Activated naive CD4-positive, alpha-beta T cell treated with anti-CD3 and anti-CD28 coated beads, Interleukin-2, amount 10 ng/mL, durations not matched to agents 7 days and 5 days (primary cell): ENCODE measurements at regions of chr17 and their contacts with region 1.

Region 1: GRCh38 chr17:4980644-4981216 is 6.7 kb downstream of the CAMTA2 start:
- DNase-seq: peak; percentile 66
- H3K4me3 Mint-ChIP-seq: no peak overlapping the region
- H3K27ac Mint-ChIP-seq: peak overlapping the region; percentile 58
- H3K4me1 Mint-ChIP-seq: peaks cover 34% of the 10 kb centered on the region
- H3K27me3 Mint-ChIP-seq: no peaks in the 10 kb centered on the region

Region 2: DNA sequence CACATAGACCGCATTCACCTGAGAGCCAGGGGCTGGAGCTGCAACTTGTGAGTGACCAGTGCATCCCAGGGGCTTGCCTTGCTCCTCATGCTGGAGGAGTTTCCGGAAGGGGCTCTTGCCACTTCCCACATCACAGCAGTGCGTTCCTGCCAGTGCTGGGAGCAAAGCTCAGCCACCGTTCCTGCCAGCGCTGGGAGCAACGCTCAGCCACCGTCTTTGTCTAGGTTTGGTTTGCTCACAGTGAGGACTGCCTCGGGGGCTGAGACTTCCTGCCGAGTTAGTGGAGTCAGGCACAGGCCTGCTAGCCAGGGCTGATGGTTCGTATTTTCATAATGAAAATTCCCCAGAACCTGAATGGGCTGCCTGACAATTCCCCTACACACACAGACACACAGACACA is 72.4 kb before region 1 on chr17:
- CTCF ChIA-PET with region 1: interaction called, 11 read pairs
- DNase-seq: peak; percentile 47
- H3K4me3 Mint-ChIP-seq: no peak overlapping the region
- H3K27ac Mint-ChIP-seq: no peak overlapping the region
- H3K4me1 Mint-ChIP-seq: peaks cover 12% of the 10 kb centered on the region
- H3K27me3 Mint-ChIP-seq: peaks cover 26% of the 10 kb centered on the region

Region 3: DNA sequence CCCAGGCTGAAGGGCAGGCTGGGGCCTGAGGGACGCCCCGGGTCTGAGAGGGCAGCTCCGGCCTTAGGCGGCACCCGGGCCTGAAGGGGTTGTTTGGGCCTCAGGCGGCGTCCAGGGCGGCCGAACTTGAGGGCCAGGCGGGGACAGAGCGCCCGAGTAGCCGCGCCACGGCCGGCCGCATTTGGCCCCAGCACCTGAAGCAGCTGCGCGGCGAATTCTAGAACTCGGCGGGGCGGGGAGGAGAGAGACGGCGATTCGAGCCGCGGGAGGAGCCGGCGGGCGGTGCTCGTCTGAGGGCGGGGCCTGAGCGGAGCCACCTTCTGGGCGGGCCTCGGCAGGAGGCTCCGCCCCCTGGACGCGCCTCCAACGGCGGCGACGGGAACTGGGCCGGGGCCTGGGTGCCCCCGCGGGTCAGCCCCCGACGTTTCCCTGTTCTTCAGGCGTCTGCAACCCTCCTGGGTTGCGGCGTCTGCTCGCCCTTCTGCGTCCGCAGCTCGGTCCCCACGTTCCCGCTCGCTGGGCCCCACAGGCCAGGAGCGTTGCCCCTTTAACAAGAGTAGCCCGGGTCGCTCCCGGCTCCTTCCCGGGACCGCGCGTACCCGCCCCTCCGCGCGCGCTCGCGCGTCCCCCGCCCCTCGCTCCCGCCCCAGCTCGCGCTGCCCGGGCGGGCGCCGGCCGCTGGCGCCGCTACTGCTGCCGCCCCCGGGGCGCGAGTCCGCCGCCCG is 16.7 kb after region 1 on chr17 and contains the starts of genes INCA1 and KIF1C:
- CTCF ChIA-PET with region 1: no interaction called
- DNase-seq: peak; percentile 94
- H3K4me3 Mint-ChIP-seq: peak within 1 kb of the TSS; percentile 86
- H3K27ac Mint-ChIP-seq: peak within 1 kb of the TSS; percentile 76
- H3K4me1 Mint-ChIP-seq: peaks cover 27% of the 10 kb centered on the region
- H3K27me3 Mint-ChIP-seq: peaks cover 22% of the 10 kb centered on the region

Region 4: DNA sequence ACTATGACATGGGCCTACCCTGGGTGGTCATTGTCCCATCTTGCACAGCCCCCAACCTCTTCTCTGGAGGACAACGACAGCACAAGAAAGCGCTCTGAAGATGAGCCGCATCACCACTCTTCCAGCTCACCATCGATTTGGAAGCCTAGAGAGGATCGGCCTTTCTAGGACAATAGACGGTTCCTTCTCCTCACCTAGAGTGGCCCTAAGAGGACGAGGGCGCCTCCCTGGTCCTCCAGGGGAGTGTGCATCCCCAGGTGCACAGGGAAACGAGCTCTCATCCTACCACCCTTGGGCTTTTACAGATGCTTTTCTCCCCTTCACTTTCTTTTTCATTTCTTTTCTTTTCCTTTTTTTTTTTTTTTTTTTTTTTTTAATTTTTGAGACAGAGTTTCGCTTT is 74.8 kb after region 1 on chr17:
- CTCF ChIA-PET with region 1: interaction called, 45 read pairs
- DNase-seq: no peak
- H3K4me3 Mint-ChIP-seq: no peak overlapping the region
- H3K27ac Mint-ChIP-seq: no peak overlapping the region
- H3K4me1 Mint-ChIP-seq: peaks cover 1% of the 10 kb centered on the region
- H3K27me3 Mint-ChIP-seq: peaks cover 4% of the 10 kb centered on the region